Uterus (tissue), 4 donors: ENCODE measurements at regions of chr3 and their contacts with region 1.

Region 1: GRCh38 chr3:190321789-190322603 is at the start of gene CLDN1:
- DNase-seq: peak; percentile 80 to 82
- H3K4me3 ChIP-seq: peak within 1 kb of the TSS; percentile 60 to 63
- H3K27ac ChIP-seq: peak within 1 kb of the TSS; percentile 76 to 83
- H3K4me1 ChIP-seq: no peaks in the 10 kb centered on the region
- H3K27me3 ChIP-seq: no peaks in the 10 kb centered on the region
- CTCF ChIP-seq: peak; percentile 79 to 95 (median 92)
- POLR2A ChIP-seq: peak; percentile 22 to 70
- total RNA-seq, gene CLDN1: 15.1 to 200 (median 38.6) TPM

Region 2: GRCh38 chr3:190197346-190197763 is 124.6 kb before region 1 on chr3:
- intact Hi-C with region 1: no loop called
- DNase-seq: no peak
- H3K4me3 ChIP-seq: no peak overlapping the region
- H3K27ac ChIP-seq: no peak overlapping the region
- H3K4me1 ChIP-seq: no peaks in the 10 kb centered on the region
- H3K27me3 ChIP-seq: no peaks in the 10 kb centered on the region
- CTCF ChIP-seq: no peak
- POLR2A ChIP-seq: no peak

Region 3: GRCh38 chr3:190224863-190225692 is 96.9 kb before region 1 on chr3:
- intact Hi-C with region 1: loop called (anchors 2 kb)
- DNase-seq: no peak
- H3K4me3 ChIP-seq: no peak overlapping the region
- H3K27ac ChIP-seq: no peak overlapping the region
- H3K4me1 ChIP-seq: no peaks in the 10 kb centered on the region
- H3K27me3 ChIP-seq: no peaks in the 10 kb centered on the region
- CTCF ChIP-seq: peak; percentile 33 to 47 (median 44)
- POLR2A ChIP-seq: no peak